ENCODE measurements at regions of chr2 and their contacts with region 1.

Region 1: DNA sequence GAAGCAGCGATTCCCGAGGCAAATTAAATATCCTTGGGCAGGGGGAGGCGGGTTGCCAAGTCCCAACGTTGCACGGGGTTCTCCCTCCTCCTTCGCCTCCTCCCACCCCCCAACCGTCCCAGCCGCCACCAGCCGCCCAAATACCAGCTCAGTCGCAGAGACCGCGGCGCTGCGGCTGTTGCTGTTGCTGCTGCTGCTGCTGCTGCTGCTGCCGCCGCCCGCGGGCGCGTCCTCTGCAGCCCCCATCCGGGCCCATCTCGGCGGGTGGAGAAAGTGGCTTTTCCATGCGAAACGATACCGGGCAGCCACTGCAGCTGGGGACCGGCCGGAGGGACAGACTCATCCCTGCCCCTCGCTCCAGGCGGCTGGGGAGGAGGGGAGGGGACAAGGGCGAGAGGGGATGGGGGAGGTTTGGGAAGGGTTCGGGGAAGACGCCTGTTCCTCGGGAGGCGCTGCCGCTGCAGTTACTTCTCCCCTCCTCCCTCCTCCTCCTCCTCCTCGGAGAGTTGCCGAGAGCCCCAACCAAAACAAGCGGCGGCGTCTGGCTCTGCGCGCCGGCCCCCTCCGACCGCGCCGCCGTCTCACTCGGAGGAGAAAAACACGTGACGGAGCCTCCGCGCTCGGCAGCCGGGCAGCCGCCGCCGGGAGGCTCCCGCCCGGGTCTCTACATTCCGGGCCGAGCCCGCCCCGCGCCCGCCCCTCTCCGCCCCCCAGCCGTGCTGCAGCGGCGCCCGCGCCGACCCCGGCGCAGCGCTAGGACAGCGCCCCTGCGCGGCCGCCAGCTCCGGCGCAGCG is at the start of gene IRS1:
- DNase-seq: peak; percentile 65 to 81
- ATAC-seq: peak; percentile 36 to 71 (median 49)
- H3K4me3 ChIP-seq: peak within 1 kb of the TSS; percentile 68 to 95 (median 84)
- H3K27ac ChIP-seq: peak within 1 kb of the TSS; percentile 80 to 97 (median 92)
- H3K4me1 ChIP-seq: peaks cover 3 to 69% (median 48%) of the 10 kb centered on the region in 9 donors
- H3K27me3 ChIP-seq: peaks cover 0 to 58% (median 0%) of the 10 kb centered on the region in 7 donors
- CTCF ChIP-seq: peak in 3 of 9 donors; percentile 52 to 61 (median 59)
- total RNA-seq, gene IRS1: 12.7 to 20.2 (median 15.1) TPM

Region 2: GRCh38 chr2:225660262-225661131 is 1138.9 kb before region 1 on chr2:
- intact Hi-C with region 1: loop called in 4 of 10 experiments (anchors 5 to 10 kb)
- DNase-seq: peak; percentile 54 to 61
- ATAC-seq: no peak
- H3K4me3 ChIP-seq: no peak overlapping the region
- H3K27ac ChIP-seq: no peak overlapping the region
- H3K4me1 ChIP-seq: no peaks in the 10 kb centered on the region
- H3K27me3 ChIP-seq: peaks cover 0 to 33% (median 7%) of the 10 kb centered on the region in 7 donors
- CTCF ChIP-seq: peak; percentile 67 to 87 (median 82)

Region 3: GRCh38 chr2:225889446-225889850 is 909.9 kb before region 1 on chr2:
- intact Hi-C with region 1: loop called (anchors 1 to 10 kb)
- DNase-seq: peak in 1 of 2 donors; percentile 5
- ATAC-seq: peak in 3 of 8 donors; percentile 47 to 65 (median 51)
- H3K4me3 ChIP-seq: no peak overlapping the region
- H3K27ac ChIP-seq: no peak overlapping the region
- H3K4me1 ChIP-seq: peaks cover 0 to 5% (median 0%) of the 10 kb centered on the region in 9 donors
- H3K27me3 ChIP-seq: no peaks in the 10 kb centered on the region
- CTCF ChIP-seq: peak; percentile 42 to 85 (median 77)

Region 4: GRCh38 chr2:226215902-226216503 is 583.4 kb before region 1 on chr2:
- intact Hi-C with region 1: loop called (anchors 2 to 10 kb)
- DNase-seq: peak in 1 of 2 donors; percentile 53
- ATAC-seq: peak in 6 of 8 donors; percentile 72 to 86 (median 76)
- H3K4me3 ChIP-seq: no peak overlapping the region
- H3K27ac ChIP-seq: no peak overlapping the region
- H3K4me1 ChIP-seq: peaks cover 0 to 17% (median 10%) of the 10 kb centered on the region in 9 donors
- H3K27me3 ChIP-seq: no peaks in the 10 kb centered on the region
- CTCF ChIP-seq: peak in 8 of 9 donors; percentile 32 to 77 (median 68)

Region 5: DNA sequence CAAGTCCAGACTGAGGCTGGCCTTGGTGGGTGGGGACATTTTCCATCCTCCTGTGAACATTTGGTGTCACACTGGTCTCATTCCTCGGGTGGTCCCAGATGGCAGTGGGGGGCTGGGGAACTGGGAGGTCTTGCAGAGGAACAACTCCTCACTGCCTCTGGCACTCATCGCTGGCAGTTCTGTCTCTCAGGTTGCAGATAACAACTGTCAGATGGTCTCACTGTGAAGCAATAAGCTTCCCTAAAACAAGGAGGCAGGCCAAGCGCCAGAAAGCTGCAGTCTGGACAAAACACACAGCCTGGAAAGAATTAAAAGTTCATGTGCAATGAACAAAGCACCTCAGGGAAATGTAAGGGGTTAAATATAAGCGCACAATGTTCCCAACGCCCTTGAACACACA is 77.8 kb before region 1 on chr2:
- intact Hi-C with region 1: loop called in 4 of 10 experiments (anchors 5 to 10 kb)
- DNase-seq: peak; percentile 41
- ATAC-seq: peak in 1 of 8 donors; percentile 6
- H3K4me3 ChIP-seq: no peak overlapping the region
- H3K27ac ChIP-seq: no peak overlapping the region
- H3K4me1 ChIP-seq: peaks cover 3 to 34% (median 26%) of the 10 kb centered on the region in 9 donors
- H3K27me3 ChIP-seq: no peaks in the 10 kb centered on the region
- CTCF ChIP-seq: no peak

Measured in heart right ventricle (tissue), 16 donors.